ENCODE measurements at regions of chr18 and their contacts with region 1.

Region 1: GRCh38 chr18:13726232-13726971 is at the starts of genes FAM210A and RNMT:
- DNase-seq: peak; percentile 86
- ATAC-seq: peak; percentile 93
- H3K4me3 Mint-ChIP-seq: peak within 1 kb of the TSS; percentile 96
- H3K27ac Mint-ChIP-seq: peak within 1 kb of the TSS; percentile 96
- H3K4me1 Mint-ChIP-seq: peaks cover 46% of the 10 kb centered on the region
- H3K27me3 Mint-ChIP-seq: no peaks in the 10 kb centered on the region
- CTCF ChIP-seq: no peak
- total RNA-seq, gene FAM210A: 12.6 and 13.9 TPM in 2 replicates
- total RNA-seq, gene RNMT: 45.5 and 48.5 TPM in 2 replicates

Region 2: GRCh38 chr18:12645254-12646203 is 1080.9 kb before region 1 on chr18:
- CTCF ChIA-PET with region 1: no interaction called
- POLR2A ChIA-PET with region 1: no interaction called
- intact Hi-C with region 1: no loop called
- DNase-seq: no peak
- ATAC-seq: no peak
- H3K4me3 Mint-ChIP-seq: no peak overlapping the region
- H3K27ac Mint-ChIP-seq: no peak overlapping the region
- H3K4me1 Mint-ChIP-seq: no peaks in the 10 kb centered on the region
- H3K27me3 Mint-ChIP-seq: peaks cover 13% of the 10 kb centered on the region
- CTCF ChIP-seq: no peak

Region 3: GRCh38 chr18:12838178-12838634 is 888.2 kb before region 1 on chr18:
- CTCF ChIA-PET with region 1: no interaction called
- POLR2A ChIA-PET with region 1: no interaction called
- intact Hi-C with region 1: loop called (anchors 2 kb)
- DNase-seq: no peak
- ATAC-seq: no peak
- H3K4me3 Mint-ChIP-seq: peak overlapping the region; percentile 52
- H3K27ac Mint-ChIP-seq: peak overlapping the region; percentile 84
- H3K4me1 Mint-ChIP-seq: peaks cover 44% of the 10 kb centered on the region
- H3K27me3 Mint-ChIP-seq: no peaks in the 10 kb centered on the region
- CTCF ChIP-seq: no peak

Region 4: DNA sequence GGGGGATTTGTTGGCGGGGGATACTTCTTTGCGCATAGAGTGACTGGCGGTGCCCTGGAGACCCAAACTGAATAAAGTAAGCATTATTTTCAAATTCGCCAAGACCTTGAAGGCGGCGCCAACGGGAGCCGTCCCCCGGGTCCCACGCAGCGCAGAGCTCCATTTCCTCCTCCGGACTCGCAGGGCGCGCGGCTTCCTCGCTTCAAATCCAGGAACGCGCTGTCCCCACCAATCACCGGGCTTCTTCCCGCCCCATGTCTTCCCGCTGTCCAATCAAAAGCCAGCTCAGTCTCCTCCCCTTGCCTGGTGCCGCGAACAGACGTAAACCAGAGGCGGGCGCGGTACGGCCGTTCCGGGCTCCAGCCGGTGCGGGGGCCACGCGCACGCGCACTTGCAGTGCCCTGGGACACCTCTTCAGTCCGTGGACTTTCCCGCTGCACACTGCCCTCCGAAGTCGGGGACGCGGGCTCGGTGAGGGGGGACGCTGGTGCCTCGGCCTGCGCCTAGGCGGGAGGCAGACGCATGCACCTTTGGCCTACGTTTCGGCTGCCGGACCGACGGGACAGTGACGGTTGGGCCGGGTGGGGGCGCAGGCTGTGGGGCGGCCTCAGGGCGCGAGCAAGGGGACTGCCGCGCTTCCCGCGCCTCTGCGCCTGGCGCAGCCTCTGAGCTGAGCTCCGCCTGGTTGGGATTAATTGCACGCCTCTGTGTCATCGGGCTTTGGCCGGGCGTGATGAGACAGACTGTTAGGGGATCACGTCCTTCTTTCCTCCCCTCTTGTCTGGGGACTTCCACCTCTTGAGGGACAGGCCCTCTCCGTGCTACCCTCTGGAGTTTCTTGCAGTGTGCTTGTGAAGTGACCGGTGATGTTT is 735.2 kb before region 1 on chr18 and contains the start of gene CEP192:
- CTCF ChIA-PET with region 1: no interaction called
- POLR2A ChIA-PET with region 1: interaction called, 7 read pairs
- intact Hi-C with region 1: loop called (anchors 1 kb)
- DNase-seq: peak; percentile 93
- ATAC-seq: peak; percentile 96
- H3K4me3 Mint-ChIP-seq: peak within 1 kb of the TSS; percentile 93
- H3K27ac Mint-ChIP-seq: peak within 1 kb of the TSS; percentile 94
- H3K4me1 Mint-ChIP-seq: peaks cover 32% of the 10 kb centered on the region
- H3K27me3 Mint-ChIP-seq: no peaks in the 10 kb centered on the region
- CTCF ChIP-seq: no peak
- total RNA-seq, gene CEP192: 33.6 and 34.2 TPM in 2 replicates

Region 5: DNA sequence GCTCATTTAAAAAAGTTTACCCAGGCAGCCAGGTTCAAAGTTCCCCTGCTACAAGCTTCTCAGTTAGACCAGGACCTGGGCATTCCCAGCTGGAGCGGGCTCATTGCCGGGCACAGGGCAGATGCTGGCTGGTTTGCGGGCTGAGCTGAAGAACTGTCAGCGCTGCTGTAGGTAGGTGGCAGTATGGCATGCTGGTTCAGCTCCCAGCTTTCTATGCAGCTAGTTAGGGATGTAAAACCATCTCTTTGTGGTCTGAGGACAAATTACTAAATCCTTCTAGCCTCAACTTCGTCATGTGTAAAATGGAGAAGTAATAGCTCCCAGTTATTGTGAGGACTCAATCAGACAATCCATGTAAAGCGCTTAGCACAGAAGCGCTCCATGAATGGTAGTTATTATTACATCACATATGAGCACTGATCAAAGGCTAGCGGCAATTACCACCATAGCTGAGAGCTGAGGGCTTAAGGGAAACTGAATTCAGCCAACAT is 510.3 kb before region 1 on chr18:
- CTCF ChIA-PET with region 1: interaction called, 5 read pairs
- POLR2A ChIA-PET with region 1: no interaction called
- intact Hi-C with region 1: loop called (anchors 5 kb)
- DNase-seq: no peak
- ATAC-seq: peak; percentile 48
- H3K4me3 Mint-ChIP-seq: peak overlapping the region; percentile 79
- H3K27ac Mint-ChIP-seq: no peak overlapping the region
- H3K4me1 Mint-ChIP-seq: peaks cover 16% of the 10 kb centered on the region
- H3K27me3 Mint-ChIP-seq: peaks cover 49% of the 10 kb centered on the region
- CTCF ChIP-seq: no peak

Region 6: DNA sequence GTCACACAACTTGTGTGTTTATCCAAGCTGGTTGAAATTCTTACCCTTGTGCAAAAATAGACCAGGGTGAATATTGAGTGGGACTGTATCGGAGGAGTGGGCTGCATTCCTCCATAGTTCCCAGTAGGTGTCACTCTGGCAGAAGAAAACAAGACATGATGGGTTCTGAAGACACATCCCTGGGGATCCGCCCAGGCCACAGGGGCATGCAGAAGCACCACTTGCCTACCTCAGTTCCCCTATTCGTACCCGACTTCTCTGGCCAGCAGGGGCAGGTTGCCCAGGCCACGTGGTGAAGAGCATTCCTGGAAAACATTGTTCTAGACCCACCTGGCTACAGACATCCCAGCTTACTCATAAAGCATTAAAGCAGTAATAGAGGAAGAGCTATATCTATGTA is 168.3 kb before region 1 on chr18:
- CTCF ChIA-PET with region 1: interaction called, 11 read pairs
- POLR2A ChIA-PET with region 1: interaction called, 10 read pairs
- intact Hi-C with region 1: loop called (anchors 1 kb)
- DNase-seq: peak; percentile 56
- ATAC-seq: peak; percentile 60
- H3K4me3 Mint-ChIP-seq: peak overlapping the region; percentile 52
- H3K27ac Mint-ChIP-seq: peak overlapping the region; percentile 77
- H3K4me1 Mint-ChIP-seq: peaks cover 46% of the 10 kb centered on the region
- H3K27me3 Mint-ChIP-seq: no peaks in the 10 kb centered on the region
- CTCF ChIP-seq: peak; percentile 51

Region 7: GRCh38 chr18:13629841-13630715 is 96.3 kb before region 1 on chr18:
- CTCF ChIA-PET with region 1: no interaction called
- POLR2A ChIA-PET with region 1: no interaction called
- intact Hi-C with region 1: loop called (anchors 1 kb)
- DNase-seq: no peak
- ATAC-seq: peak; percentile 95
- H3K4me3 Mint-ChIP-seq: peak overlapping the region; percentile 17
- H3K27ac Mint-ChIP-seq: peak overlapping the region; percentile 63
- H3K4me1 Mint-ChIP-seq: peaks cover 24% of the 10 kb centered on the region
- H3K27me3 Mint-ChIP-seq: no peaks in the 10 kb centered on the region
- CTCF ChIP-seq: peak; percentile 68

Region 8: DNA sequence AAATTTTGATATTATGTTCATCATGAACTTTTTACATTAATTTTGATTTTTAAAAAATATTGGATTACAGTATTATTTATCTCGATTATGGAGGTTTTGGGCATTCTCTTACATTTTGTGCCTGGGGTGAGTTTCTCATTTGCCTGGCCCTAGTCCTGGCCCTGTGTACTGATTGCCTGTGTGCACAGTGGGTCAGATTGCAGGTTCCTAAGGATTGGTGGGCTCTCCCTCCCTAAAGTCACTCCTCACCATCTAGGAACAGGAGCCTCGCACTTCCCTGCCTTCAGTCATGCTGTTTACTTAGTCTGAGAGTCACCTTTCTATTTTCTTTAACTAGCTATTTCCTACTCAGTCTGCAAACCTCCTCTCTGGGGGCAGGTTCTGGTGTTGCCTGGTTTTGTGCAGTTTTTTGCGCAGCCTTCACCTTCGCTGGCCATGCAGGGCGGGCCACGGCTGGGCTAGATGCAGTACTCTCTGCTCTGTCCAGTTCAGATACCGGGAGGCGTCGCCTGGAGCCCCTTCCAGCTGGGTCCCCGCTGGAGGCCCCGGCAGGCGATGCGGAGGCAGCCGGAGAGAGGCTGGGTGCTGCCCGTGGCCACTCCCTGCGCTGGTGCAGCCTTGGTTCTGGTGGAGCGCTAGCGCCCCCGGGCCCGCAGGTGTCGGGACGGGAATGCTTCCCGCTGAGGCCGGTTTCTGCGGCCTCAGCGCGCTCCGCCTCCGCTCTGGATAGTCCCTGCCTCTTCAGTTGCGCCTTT is 74.3 kb after region 1 on chr18:
- CTCF ChIA-PET with region 1: no interaction called
- POLR2A ChIA-PET with region 1: no interaction called
- intact Hi-C with region 1: no loop called
- DNase-seq: no peak
- ATAC-seq: no peak
- H3K4me3 Mint-ChIP-seq: no peak overlapping the region
- H3K27ac Mint-ChIP-seq: no peak overlapping the region
- H3K4me1 Mint-ChIP-seq: peaks cover 4% of the 10 kb centered on the region
- H3K27me3 Mint-ChIP-seq: peaks cover 56% of the 10 kb centered on the region
- CTCF ChIP-seq: no peak

Measured in activated B cell treated with CpG ODN at 0.5 μM for 24 hours (primary cell).